GM13977 (cell line): ENCODE measurements at regions of chr3 and their contacts with region 1.

Region 1: DNA sequence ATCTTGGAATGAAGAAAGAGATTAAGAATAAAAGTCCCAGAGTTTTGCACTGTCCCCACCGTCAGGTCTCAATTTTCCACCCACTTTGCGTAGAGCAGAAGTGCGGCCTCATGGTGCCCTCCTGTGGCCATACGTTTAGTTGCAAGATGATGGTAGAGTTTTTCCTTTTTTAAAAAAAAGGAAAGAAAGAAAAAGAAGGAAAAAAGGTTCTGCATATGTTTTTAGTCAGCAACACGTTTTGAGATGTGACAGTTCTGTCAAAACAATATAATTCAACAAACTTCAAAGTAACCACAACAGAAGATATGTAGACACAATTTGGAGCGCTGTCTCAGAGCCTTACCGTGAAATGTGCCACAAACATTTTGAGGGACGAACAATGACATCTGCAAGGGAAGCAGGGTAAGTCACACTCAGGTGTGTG is 24.6 kb downstream of the EBLN2 start:
- DNase-seq: peak; percentile 51
- CTCF ChIP-seq: peak; percentile 82

Region 2: GRCh38 chr3:71710906-71711494 is 1375.1 kb before region 1 on chr3:
- in situ Hi-C with region 1: loop called (anchors 25 kb)
- DNase-seq: peak; percentile 71
- CTCF ChIP-seq: peak; percentile 63

Region 3: DNA sequence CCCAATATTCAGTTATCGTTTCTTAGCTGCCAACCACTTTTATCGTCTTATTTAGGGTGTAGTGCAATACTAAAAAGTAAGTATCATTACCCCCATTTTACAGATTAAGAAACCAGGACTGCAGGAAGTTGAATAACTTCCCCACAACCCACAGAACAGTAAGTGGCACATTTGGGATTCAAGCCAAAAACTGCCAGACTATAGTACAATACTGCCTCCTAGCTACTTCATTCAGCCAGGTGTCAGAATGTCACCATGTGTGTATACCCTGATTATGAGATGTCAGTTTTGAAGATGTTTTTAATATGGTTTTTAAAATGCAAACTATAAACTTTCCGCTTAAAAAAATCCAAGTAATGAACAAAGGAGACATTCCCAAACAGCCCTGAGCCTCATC is 1227.0 kb before region 1 on chr3:
- in situ Hi-C with region 1: loop called (anchors 25 kb)
- DNase-seq: peak; percentile 27
- CTCF ChIP-seq: peak; percentile 46

Region 4: GRCh38 chr3:72949016-72949415 is 137.1 kb before region 1 on chr3:
- in situ Hi-C with region 1: loop called (anchors 10 kb)
- DNase-seq: no peak
- CTCF ChIP-seq: no peak

Region 5: GRCh38 chr3:73351423-73352071 is 265.5 kb after region 1 on chr3:
- in situ Hi-C with region 1: no loop called
- DNase-seq: no peak
- CTCF ChIP-seq: no peak

Region 6: DNA sequence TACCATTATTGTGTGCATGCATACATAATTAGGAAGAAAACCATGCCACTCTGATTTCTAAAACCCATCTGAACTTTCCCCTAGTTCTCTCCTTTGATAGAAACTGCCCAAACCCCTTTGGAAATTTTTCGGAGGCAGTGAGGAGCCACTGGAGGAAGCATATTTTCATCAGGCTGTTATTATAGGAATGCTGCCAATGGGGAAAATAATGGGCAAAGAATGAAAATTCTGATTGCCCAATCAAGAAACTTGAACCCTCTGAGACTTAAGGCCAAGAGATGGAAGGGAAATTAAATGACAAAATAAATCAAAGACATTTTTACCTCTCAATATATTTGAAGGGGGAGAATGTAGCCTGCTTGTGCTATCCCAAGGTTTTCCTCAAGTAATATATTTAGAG is 914.6 kb after region 1 on chr3:
- in situ Hi-C with region 1: no loop called
- DNase-seq: no peak
- CTCF ChIP-seq: no peak